ENCODE measurements at regions of chr16 and their contacts with region 1.

Region 1: GRCh38 chr16:56576585-56577293 is 11.9 kb downstream of the MT4 start:
- DNase-seq: peak; percentile 78
- H3K4me3 ChIP-seq: no peak overlapping the region
- H3K27ac ChIP-seq: no peak overlapping the region
- H3K4me1 ChIP-seq: no peaks in the 10 kb centered on the region
- CTCF ChIP-seq: peak; percentile 92

Region 2: GRCh38 chr16:56542039-56542438 is 34.7 kb before region 1 on chr16:
- CTCF ChIA-PET with region 1: no interaction called
- POLR2A ChIA-PET with region 1: no interaction called
- intact Hi-C with region 1: no loop called
- DNase-seq: no peak
- H3K4me3 ChIP-seq: no peak overlapping the region
- H3K27ac ChIP-seq: no peak overlapping the region
- H3K4me1 ChIP-seq: peaks cover 2% of the 10 kb centered on the region
- CTCF ChIP-seq: no peak

Region 3: GRCh38 chr16:56551796-56552738 is 24.7 kb before region 1 on chr16:
- CTCF ChIA-PET with region 1: no interaction called
- POLR2A ChIA-PET with region 1: no interaction called
- intact Hi-C with region 1: no loop called
- DNase-seq: peak; percentile 63
- H3K4me3 ChIP-seq: no peak overlapping the region
- H3K27ac ChIP-seq: no peak overlapping the region
- H3K4me1 ChIP-seq: peaks cover 26% of the 10 kb centered on the region
- CTCF ChIP-seq: no peak

Region 4: DNA sequence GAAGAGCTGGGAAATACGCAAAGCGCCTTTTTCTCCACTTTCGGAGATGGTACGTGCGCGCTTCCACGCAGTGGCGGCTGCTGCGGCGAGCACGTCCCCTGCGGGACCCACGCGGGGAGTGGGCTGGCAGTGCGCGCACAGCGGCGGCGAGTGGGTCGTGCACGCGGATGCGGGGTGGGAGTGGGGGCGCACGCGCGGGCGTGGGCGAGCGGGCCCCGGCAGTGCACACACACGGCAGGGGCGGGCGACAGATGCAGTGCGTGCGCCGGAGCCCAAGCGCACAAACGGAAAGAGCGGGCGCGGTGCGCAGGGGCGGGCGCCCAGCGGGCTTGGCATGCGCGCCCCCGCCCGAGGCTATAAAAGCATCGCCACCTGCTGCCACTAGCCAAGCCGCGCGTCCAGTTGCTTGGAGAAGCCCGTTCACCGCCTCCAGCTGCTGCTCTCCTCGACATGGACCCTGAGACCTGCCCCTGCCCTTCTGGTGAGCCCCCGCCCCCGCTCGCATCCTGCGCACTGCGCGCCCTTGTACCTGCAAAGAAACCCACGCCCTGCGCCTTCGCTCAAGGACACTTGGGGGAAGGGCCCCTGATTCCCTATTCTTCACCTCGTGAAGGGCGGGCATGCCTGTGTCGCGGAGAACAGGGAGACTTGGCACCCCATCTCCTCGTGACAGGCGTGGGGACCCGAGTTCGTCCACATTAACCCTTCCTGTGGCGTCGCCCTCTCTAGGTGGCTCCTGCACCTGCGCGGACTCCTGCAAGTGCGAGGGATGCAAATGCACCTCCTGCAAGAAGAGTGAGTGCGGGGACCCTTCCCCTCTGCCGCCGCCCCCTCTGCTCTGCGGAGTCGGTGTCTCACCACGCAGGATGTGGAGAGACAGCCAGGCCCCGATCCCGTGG is 12.7 kb after region 1 on chr16 and contains the start of gene MT3:
- CTCF ChIA-PET with region 1: no interaction called
- POLR2A ChIA-PET with region 1: no interaction called
- intact Hi-C with region 1: no loop called
- DNase-seq: no peak
- H3K4me3 ChIP-seq: no peak within 1 kb of the TSS
- H3K27ac ChIP-seq: no peak within 1 kb of the TSS
- H3K4me1 ChIP-seq: peaks cover 11% of the 10 kb centered on the region
- CTCF ChIP-seq: no peak
- total RNA-seq, gene MT3: not detected in 2 replicates

Region 5: DNA sequence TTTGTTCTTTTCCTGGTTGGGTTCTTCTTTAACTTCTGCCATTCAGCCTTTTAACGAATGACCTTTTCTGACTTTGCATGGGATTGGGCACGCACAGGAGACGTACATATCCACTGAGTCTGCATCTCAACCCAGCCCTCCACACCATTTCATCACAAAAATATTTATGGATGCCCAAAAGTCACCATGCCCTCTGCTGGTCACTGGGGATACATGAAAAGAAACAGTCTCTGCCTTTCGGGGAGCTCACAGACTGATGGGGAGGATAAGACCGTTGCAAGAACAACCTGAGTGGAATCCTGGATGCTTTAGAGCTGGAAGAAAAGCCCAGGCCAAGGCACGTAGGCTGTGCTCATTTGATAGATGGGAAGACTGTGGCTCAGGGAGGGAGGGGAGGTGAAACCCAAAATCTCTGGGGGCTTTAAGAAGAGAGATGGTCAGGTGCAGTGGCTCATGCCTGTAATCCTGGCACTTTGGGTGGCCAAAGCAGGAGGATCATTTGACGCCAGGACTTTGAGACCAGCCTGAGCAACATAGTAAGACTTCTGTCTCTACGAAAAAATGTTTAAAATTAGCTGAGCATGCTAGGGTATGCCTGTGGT is 23.8 kb after region 1 on chr16:
- CTCF ChIA-PET with region 1: no interaction called
- POLR2A ChIA-PET with region 1: interaction called, 3 read pairs
- intact Hi-C with region 1: loop called (anchors 1 kb)
- DNase-seq: peak; percentile 58
- H3K4me3 ChIP-seq: no peak overlapping the region
- H3K27ac ChIP-seq: no peak overlapping the region
- H3K4me1 ChIP-seq: peaks cover 11% of the 10 kb centered on the region
- CTCF ChIP-seq: peak; percentile 82

Region 6: DNA sequence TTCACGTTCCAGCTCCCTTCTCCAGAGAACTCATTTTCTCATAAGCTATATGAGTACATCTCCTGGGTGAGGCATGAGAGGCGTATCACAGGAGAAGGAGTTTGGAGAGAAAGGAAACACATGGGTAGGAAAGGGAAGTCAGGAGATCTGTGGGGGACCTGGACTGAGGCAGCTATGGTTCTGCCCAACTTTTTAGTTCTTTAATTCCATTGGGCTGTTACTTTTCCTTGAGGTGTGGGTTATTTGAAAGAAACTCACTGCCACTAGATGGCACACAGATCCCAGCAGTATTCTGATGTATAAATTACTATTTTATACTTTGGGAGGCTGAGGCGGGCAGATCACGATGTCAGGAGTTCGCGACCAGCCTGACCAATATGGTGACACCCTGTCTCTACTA is 216.8 kb after region 1 on chr16:
- CTCF ChIA-PET with region 1: no interaction called
- POLR2A ChIA-PET with region 1: no interaction called
- intact Hi-C with region 1: loop called (anchors 5 kb)
- DNase-seq: peak; percentile 52
- H3K4me3 ChIP-seq: no peak overlapping the region
- H3K27ac ChIP-seq: no peak overlapping the region
- H3K4me1 ChIP-seq: no peaks in the 10 kb centered on the region
- CTCF ChIP-seq: peak; percentile 77

Region 7: DNA sequence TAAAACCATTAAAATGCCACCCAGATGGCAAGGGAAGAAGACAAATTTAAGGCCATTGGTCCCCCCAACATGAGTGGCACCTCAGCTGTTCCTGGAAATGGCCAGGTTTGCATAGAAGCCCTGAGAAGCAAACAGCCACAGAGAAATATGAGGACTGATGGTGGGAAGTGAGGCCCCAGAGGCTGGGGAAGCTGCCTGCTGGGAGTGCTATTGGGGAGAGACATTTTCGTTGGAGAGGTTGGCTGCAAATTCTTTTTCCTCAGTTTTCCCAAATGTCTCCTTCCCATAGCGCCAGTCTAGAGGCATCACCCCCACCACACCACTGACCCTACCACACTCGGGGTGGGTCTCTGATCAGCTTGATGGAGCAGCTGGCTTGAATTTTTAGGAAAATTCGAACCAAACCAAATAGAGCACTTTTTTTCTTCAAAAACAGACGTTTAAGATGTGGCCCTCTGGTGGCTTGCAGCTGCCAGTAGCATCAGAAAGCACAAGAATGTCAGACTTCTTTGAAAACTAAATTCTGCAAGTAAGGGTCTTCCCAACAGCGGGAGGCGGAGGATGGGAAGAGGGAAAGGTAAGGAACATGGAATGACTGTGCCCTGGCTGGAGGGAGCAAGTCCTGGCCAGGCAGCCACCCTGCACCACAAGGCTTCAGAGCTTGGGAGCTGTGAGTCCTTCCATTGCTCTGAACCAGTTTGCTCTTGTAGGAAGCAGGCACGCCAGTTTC is 275.1 kb after region 1 on chr16:
- CTCF ChIA-PET with region 1: no interaction called
- POLR2A ChIA-PET with region 1: no interaction called
- intact Hi-C with region 1: loop called (anchors 5 kb)
- DNase-seq: peak; percentile 65
- H3K4me3 ChIP-seq: no peak overlapping the region
- H3K27ac ChIP-seq: no peak overlapping the region
- H3K4me1 ChIP-seq: peaks cover 46% of the 10 kb centered on the region
- CTCF ChIP-seq: peak; percentile 85